WTC11 (cell line): ENCODE measurements at regions of chr5 and their contacts with region 1.

Region 1: GRCh38 chr5:175534070-175534932 is 55.9 kb downstream of the SFXN1 start:
- DNase-seq: peak; percentile 92
- ATAC-seq: peak; percentile 89
- H3K4me3 Mint-ChIP-seq: peak overlapping the region; percentile 33
- H3K27ac Mint-ChIP-seq: no peak overlapping the region
- H3K4me1 Mint-ChIP-seq: peaks cover 41% of the 10 kb centered on the region
- H3K27me3 Mint-ChIP-seq: no peaks in the 10 kb centered on the region
- CTCF ChIP-seq: peak; percentile 99

Region 2: GRCh38 chr5:175556777-175557176 is 22.5 kb after region 1 on chr5:
- CTCF ChIA-PET with region 1: interaction called, 48 read pairs
- POLR2A ChIA-PET with region 1: interaction called, 3 read pairs
- DNase-seq: no peak
- ATAC-seq: peak; percentile 17
- H3K4me3 Mint-ChIP-seq: peak overlapping the region; percentile 37; the same call in 1 of the 2 replicates
- H3K27ac Mint-ChIP-seq: peak overlapping the region; percentile 86
- H3K4me1 Mint-ChIP-seq: peaks cover 70% of the 10 kb centered on the region
- H3K27me3 Mint-ChIP-seq: no peaks in the 10 kb centered on the region
- CTCF ChIP-seq: no peak

Region 3: DNA sequence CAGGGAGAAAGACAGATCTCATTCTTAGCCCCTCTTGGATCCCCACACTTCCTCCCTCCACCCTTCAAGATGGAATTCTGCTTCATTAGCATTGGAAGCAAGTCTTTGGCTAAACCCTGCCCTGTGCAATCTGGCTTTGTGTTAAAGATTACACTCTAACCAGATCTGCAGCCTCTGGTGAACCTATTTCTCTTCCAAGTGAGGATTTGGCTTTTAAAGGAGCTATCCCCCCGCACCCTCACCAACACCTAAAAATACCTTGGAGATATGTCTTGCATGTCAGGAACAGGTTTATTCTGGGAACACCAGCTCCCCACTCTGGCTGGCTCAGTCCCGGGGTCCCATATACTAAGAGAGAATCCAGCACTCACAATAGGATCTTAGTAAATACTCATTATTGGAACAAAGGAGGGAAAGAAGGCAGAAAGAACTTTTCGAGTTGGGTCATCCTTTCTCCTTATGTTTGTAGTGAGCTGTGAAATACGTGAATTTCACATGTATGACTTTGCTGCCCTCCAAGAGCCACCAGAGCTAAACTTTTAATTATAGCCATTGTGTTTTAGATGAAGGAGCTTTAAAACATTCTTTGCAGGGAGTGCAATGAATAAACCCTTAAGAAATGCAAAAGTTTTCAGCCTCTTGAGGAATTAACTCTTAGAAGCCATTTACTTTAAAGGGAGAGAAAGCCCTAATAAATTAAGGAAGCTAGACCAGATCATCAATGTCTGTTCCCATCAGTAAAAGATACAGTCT is 69.9 kb after region 1 on chr5:
- CTCF ChIA-PET with region 1: interaction called, 33 read pairs
- POLR2A ChIA-PET with region 1: interaction called, 3 read pairs
- DNase-seq: no peak
- ATAC-seq: peak; percentile 91
- H3K4me3 Mint-ChIP-seq: peak overlapping the region; percentile 32
- H3K27ac Mint-ChIP-seq: peak overlapping the region; percentile 90
- H3K4me1 Mint-ChIP-seq: peaks cover 33% of the 10 kb centered on the region
- H3K27me3 Mint-ChIP-seq: peaks cover 3% of the 10 kb centered on the region; the same call in 1 of the 2 replicates
- CTCF ChIP-seq: no peak

Region 4: GRCh38 chr5:175638305-175638704 is 104.0 kb after region 1 on chr5:
- CTCF ChIA-PET with region 1: interaction called, 38 read pairs
- POLR2A ChIA-PET with region 1: no interaction called
- DNase-seq: no peak
- ATAC-seq: peak; percentile 78
- H3K4me3 Mint-ChIP-seq: no peak overlapping the region
- H3K27ac Mint-ChIP-seq: peak overlapping the region; percentile 42
- H3K4me1 Mint-ChIP-seq: peaks cover 47% of the 10 kb centered on the region
- H3K27me3 Mint-ChIP-seq: no peaks in the 10 kb centered on the region; the same call in 1 of the 2 replicates
- CTCF ChIP-seq: no peak

Region 5: GRCh38 chr5:175671013-175671412 is 136.7 kb after region 1 on chr5:
- CTCF ChIA-PET with region 1: interaction called, 24 read pairs
- POLR2A ChIA-PET with region 1: no interaction called
- DNase-seq: no peak
- ATAC-seq: no peak
- H3K4me3 Mint-ChIP-seq: no peak overlapping the region
- H3K27ac Mint-ChIP-seq: peak overlapping the region; percentile 45; the same call in 1 of the 2 replicates
- H3K4me1 Mint-ChIP-seq: peaks cover 9% of the 10 kb centered on the region
- H3K27me3 Mint-ChIP-seq: no peaks in the 10 kb centered on the region
- CTCF ChIP-seq: no peak

Region 6: DNA sequence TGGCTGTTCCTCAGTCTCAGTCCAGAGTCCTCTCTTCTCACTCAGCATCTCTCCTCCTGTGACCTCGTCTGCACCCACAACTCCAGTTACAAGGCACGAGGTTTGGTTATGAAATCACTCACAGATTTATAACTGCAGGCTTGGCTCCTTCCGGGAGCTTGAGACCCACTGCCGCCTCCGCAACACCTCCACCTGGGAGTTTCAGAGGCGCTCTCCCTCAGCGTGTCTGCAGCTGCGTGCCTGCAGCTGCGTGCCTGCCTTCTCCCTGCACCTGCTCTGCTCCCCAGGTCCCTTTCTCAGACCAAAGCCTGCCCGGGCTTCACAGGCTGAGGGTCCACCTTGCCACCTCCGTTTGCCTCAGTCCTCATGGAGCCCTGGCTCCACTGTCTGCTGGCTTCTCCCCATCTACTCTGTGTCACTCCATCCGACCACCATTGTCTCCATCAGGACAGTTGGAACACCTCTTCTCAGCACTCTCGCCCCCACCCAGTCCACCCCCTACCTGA is 175.0 kb after region 1 on chr5:
- CTCF ChIA-PET with region 1: interaction called, 68 read pairs
- POLR2A ChIA-PET with region 1: no interaction called
- DNase-seq: peak; percentile 6
- ATAC-seq: no peak
- H3K4me3 Mint-ChIP-seq: no peak overlapping the region
- H3K27ac Mint-ChIP-seq: no peak overlapping the region
- H3K4me1 Mint-ChIP-seq: no peaks in the 10 kb centered on the region
- H3K27me3 Mint-ChIP-seq: peaks cover 8% of the 10 kb centered on the region; the same call in 1 of the 2 replicates
- CTCF ChIP-seq: no peak